Mammary epithelial cell (primary cell): ENCODE measurements at regions of chr4 and their contacts with region 1.

Region 1: GRCh38 chr4:1910643-1911042 is 39.5 kb downstream of the NSD2 start:
- DNase-seq: peak; percentile 29
- H3K4me3 ChIP-seq: no peak overlapping the region
- H3K27ac ChIP-seq: no peak overlapping the region
- H3K4me1 ChIP-seq: peaks cover 15% of the 10 kb centered on the region
- H3K27me3 ChIP-seq: no peaks in the 10 kb centered on the region
- CTCF ChIP-seq: peak; percentile 57 to 76

Region 2: DNA sequence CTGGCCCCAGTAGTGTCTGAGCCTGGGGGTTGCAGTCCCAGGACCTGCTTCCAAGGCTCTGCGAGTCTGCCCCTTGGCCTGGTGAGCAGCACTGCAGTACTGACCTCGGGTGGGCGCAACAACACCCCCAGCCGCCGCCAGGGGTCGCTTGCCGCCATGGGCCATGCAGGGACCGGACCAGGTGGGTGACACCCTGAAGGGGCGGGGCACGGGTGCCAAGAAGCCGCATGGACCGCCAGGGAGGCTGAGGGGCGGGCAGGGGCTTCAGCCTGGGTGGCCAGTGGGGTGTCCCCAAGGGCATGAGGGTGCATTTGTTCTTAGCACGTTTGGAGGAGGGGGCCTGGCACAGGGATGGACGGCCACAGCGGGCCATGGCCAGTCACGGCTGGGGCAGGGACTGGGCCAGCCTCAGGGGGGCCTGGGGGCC is 164.4 kb before region 1 on chr4:
- CTCF ChIA-PET with region 1: no interaction called
- dilution Hi-C with region 1: no loop called
- in situ Hi-C with region 1: no loop called
- intact Hi-C with region 1: loop called (anchors 1 kb)
- DNase-seq: no peak
- H3K4me3 ChIP-seq: no peak overlapping the region
- H3K27ac ChIP-seq: no peak overlapping the region
- H3K4me1 ChIP-seq: peaks cover under 1% of the 10 kb centered on the region
- H3K27me3 ChIP-seq: no peaks in the 10 kb centered on the region
- CTCF ChIP-seq: peak; percentile 77 to 85

Region 3: DNA sequence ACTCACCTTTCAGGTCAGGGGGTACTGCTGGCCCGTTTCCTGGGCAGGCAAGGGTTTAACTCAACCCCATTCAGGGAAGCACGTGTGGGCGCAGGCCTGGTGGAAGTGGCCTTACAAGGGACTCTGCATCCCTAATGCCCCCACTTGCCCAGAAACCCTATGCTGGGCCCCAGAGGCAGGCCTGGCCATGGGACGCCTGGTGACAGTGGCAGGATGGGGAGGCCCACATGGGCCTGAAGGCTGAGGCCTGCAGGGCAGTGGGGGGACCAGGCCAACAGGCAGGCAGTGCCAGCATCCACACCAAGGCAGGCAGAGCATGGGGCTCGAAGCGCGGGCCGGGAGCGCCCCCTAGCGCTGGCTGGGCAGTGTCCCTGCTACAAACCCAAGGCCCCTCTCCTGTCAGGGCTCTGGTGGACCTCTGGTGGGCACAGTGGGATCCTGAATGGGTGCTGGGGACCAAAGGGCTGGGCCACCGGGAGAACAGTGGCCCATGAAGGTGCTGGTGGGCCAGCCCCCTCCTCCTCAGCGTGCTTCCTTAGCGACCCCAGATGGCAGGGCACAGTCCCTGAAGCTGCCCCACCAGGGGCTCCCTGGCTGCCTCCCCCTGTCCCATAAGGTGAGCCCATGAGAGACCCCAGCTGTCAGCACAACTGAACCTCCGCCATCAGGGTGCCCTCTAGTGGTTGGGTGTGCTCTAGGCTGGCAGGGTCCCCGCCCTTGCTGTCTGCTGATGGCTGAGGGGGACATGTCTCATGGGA is 100.7 kb before region 1 on chr4:
- CTCF ChIA-PET with region 1: no interaction called
- dilution Hi-C with region 1: no loop called
- in situ Hi-C with region 1: no loop called
- intact Hi-C with region 1: loop called (anchors 5 kb)
- DNase-seq: peak; percentile 37
- H3K4me3 ChIP-seq: no peak overlapping the region
- H3K27ac ChIP-seq: no peak overlapping the region
- H3K4me1 ChIP-seq: no peaks in the 10 kb centered on the region
- H3K27me3 ChIP-seq: no peaks in the 10 kb centered on the region
- CTCF ChIP-seq: peak; percentile 67 to 86

Region 4: DNA sequence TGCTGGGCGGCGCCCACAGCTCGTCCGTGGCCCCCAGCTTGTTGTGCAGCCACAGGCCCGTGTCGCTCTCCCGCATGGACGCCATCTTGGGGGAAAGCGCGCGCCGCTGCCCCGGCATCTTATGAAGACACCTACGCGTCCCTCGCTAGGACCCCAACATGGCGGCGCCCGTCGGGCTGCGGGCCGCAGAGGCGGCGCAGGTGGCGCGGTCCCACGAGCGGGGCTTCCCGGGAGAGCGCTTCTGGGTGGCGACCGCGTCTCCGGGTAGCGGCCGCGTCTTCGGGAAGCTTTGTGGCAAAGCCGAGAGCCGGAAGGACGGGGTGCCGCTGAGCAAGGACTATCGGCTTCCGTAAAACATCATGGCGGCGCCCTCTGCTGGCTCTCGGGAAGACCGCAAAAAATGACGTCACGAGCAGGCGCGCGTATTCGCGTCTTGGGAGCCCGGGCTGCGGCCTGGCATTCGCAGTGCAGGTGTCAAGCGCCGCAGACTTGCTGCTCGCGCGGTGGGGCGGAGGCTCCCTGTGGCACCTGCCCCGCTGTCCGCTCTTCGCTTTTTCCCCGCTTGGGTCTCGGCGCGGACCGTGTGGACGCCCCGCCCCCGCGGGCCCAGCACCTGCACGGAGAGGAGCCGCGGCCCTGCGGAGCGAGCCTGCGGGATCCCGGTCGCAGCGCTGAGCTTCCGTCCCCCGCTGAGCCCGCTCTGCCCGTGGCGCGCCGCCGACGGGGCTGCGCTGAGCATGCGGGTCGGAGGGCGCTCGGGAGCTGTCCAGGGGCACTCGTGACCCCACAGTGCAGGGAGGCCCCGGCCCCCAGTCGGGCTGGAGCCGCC is 98.4 kb after region 1 on chr4 and contains the start of gene NELFA:
- CTCF ChIA-PET with region 1: no interaction called
- dilution Hi-C with region 1: no loop called
- in situ Hi-C with region 1: no loop called
- intact Hi-C with region 1: loop called (anchors 5 kb)
- DNase-seq: peak; percentile 92
- H3K4me3 ChIP-seq: peak within 1 kb of the TSS; percentile 95 to 99 (median 99)
- H3K27ac ChIP-seq: peak within 1 kb of the TSS; percentile 90
- H3K4me1 ChIP-seq: peaks cover 17% of the 10 kb centered on the region
- H3K27me3 ChIP-seq: no peaks in the 10 kb centered on the region
- CTCF ChIP-seq: no peak
- total RNA-seq, gene NELFA: 19.7 to 26.1 TPM

Region 5: GRCh38 chr4:2036866-2037265 is 126.2 kb after region 1 on chr4:
- CTCF ChIA-PET with region 1: no interaction called
- dilution Hi-C with region 1: no loop called
- in situ Hi-C with region 1: no loop called
- intact Hi-C with region 1: no loop called
- DNase-seq: no peak
- H3K4me3 ChIP-seq: no peak overlapping the region
- H3K27ac ChIP-seq: no peak overlapping the region
- H3K4me1 ChIP-seq: peaks cover 7% of the 10 kb centered on the region
- H3K27me3 ChIP-seq: peaks cover 4% of the 10 kb centered on the region
- CTCF ChIP-seq: no peak

Region 6: GRCh38 chr4:2059034-2059725 is 148.5 kb after region 1 on chr4 and contains the start of gene NAT8L:
- CTCF ChIA-PET with region 1: no interaction called
- dilution Hi-C with region 1: no loop called
- in situ Hi-C with region 1: no loop called
- intact Hi-C with region 1: no loop called
- DNase-seq: no peak
- H3K4me3 ChIP-seq: peak within 1 kb of the TSS in 1 of 3 experiments; percentile 22
- H3K27ac ChIP-seq: no peak within 1 kb of the TSS
- H3K4me1 ChIP-seq: peaks cover 3% of the 10 kb centered on the region
- H3K27me3 ChIP-seq: peaks cover 16% of the 10 kb centered on the region
- CTCF ChIP-seq: no peak
- total RNA-seq, gene NAT8L: 0.14 TPM in 1 of 2 donors, not detected in the other

Region 7: DNA sequence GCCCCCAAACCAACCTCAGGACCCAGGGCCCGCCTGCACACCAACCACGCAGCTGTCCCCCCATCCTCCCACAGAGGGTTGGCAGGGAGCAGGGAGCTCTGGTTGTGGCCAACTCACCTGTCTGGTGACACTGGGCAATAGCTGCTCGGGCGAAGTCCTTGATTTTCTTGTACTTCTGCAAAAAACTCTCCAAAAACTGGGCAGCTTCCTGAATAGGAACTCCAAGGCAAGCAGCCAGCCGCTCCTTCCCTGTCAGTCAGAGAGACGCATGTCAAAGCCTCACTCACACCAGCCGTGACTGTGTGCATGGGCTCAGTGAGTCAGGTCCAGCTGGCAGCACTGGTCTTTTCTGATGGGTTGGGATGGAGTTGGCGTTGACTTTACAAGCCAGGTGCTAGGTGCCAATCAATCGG is 174.9 kb after region 1 on chr4:
- CTCF ChIA-PET with region 1: no interaction called
- dilution Hi-C with region 1: no loop called
- in situ Hi-C with region 1: no loop called
- intact Hi-C with region 1: loop called (anchors 10 kb)
- DNase-seq: no peak
- H3K4me3 ChIP-seq: no peak overlapping the region
- H3K27ac ChIP-seq: no peak overlapping the region
- H3K4me1 ChIP-seq: no peaks in the 10 kb centered on the region
- H3K27me3 ChIP-seq: no peaks in the 10 kb centered on the region
- CTCF ChIP-seq: no peak

Region 8: GRCh38 chr4:2186133-2186864 is 275.7 kb after region 1 on chr4:
- CTCF ChIA-PET with region 1: no interaction called
- dilution Hi-C with region 1: no loop called
- in situ Hi-C with region 1: loop called in 1 of 2 experiments (anchors 25 kb)
- intact Hi-C with region 1: loop called (anchors 1 kb)
- DNase-seq: peak; percentile 58
- H3K4me3 ChIP-seq: no peak overlapping the region
- H3K27ac ChIP-seq: no peak overlapping the region
- H3K4me1 ChIP-seq: no peaks in the 10 kb centered on the region
- H3K27me3 ChIP-seq: no peaks in the 10 kb centered on the region
- CTCF ChIP-seq: peak; percentile 53 to 82